GM10248 (cell line): ENCODE measurements at regions of chr1 and their contacts with region 1.

Region 1: DNA sequence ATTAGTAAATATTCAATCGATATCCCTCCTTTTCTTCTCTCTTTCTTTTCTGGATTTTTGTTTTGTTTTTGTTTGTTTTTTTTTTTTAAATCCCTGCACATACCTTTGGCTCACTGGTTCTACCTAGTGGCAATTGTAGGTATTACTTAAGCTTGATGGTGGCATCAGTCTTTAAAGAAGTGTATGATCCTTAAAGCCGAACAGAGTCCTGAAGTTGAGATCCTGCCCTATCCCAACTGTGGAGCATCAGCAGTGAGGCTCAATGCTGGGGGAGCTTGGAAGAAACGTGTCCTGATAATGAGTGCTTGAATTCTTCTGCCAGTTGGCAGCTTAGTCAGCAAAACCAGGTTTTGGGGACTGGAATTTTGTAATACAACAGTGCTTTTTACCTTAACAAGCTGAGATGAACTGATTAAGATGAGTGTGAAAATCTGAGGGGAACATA is 60.8 kb downstream of the FASLG start:
- DNase-seq: peak; percentile 54
- CTCF ChIP-seq: peak; percentile 81

Region 2: DNA sequence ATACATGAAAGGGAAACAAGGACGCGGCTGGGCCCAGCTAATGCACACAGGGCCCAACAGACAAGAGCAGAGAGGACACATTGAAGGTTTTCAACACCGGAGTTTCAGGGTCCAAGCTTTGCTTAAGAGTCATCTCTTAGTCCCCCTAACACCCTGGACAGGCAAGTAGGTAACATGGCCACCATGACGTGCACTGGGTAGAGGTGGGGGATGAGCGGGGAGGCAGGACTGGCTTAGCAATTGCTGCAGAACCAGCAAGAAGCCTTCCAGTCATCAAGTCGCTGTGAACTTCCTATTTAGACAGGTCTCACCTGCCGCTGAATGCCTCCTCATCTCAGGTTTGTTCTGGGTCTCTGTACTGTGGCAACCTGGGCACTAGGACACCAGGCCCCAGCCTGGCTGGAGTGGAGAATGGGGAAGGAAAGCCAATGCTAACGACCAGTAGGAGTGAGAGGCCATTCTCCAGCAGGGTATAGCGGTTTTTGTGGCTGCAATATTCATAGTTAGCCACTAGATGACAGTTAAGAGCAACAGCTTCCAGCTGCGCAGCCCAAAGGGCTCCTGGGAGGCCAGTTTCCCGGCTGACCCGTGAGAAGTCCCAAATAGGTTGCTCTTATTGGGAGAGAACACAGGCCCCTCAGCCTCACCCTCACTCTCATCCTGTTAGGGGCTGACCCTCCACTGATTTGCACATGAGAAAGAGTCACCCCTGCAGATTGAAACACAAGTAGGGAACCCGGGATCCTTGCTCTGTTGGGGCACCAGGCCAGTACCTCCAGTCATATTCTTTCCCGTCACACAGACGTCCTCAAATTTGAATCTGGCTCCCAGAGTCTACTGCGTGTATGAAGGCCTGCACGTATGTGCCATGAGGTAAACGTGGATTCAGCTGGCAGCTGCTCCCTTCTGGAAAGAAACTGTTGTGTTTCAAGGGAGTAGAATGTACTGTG is 269.9 kb before region 1 on chr1:
- CTCF ChIA-PET with region 1: interaction called, 45 read pairs
- POLR2A ChIA-PET with region 1: no interaction called
- DNase-seq: peak; percentile 74
- CTCF ChIP-seq: peak; percentile 86

Region 3: GRCh38 chr1:172609528-172609927 is 110.2 kb before region 1 on chr1:
- CTCF ChIA-PET with region 1: interaction called, 11 read pairs
- POLR2A ChIA-PET with region 1: no interaction called
- DNase-seq: no peak
- CTCF ChIP-seq: peak; percentile 50